ENCODE measurements at regions of chr6 and their contacts with region 1.

Region 1: DNA sequence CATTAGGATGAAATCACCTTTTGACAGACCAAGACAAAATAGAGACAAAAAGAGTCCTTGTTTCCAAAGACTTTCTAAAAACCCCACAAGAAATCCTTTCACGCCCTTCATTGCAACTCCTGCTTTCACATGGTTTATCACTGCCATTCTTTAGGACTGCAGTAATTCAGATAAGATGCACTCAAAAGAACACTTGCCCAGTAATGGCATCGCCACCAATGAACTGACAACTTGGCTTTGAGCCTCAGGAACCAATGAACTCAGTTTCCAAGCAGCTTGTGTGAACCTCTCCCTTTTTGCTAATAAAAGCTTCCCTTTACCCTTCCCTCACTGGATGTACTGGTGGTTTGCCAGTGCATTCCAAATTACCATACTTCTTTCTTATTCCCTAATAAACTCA is 21.8 kb downstream of the OSTM1 start:
- DNase-seq: no peak
- H3K4me3 Mint-ChIP-seq: no peak overlapping the region
- H3K27ac Mint-ChIP-seq: no peak overlapping the region
- H3K4me1 Mint-ChIP-seq: no peaks in the 10 kb centered on the region
- H3K27me3 Mint-ChIP-seq: no peaks in the 10 kb centered on the region
- CTCF ChIP-seq: no peak

Region 2: DNA sequence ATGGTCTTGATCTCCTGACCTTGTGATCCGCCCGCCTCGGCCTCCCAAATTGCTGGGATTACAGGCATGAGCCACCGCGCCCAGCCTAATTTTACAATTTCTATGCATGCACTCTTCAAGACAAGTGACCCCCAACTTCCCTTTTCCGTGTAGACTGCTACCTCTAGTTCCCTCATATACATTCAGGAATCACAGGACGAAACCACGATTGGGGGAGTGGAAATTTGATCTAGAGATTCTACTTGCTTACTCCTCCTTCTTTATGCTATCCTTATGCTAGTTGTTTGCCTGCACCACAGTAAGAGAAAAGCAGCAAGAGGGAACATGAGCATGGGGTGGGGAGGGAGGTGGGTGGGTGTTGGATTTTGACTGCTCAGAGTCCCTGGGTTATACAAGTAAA is 13.0 kb before region 1 on chr6:
- CTCF ChIA-PET with region 1: interaction called, 11 read pairs
- POLR2A ChIA-PET with region 1: no interaction called
- intact Hi-C with region 1: no loop called
- DNase-seq: no peak
- H3K4me3 Mint-ChIP-seq: no peak overlapping the region
- H3K27ac Mint-ChIP-seq: no peak overlapping the region
- H3K4me1 Mint-ChIP-seq: no peaks in the 10 kb centered on the region
- H3K27me3 Mint-ChIP-seq: no peaks in the 10 kb centered on the region
- CTCF ChIP-seq: no peak